Caco-2 (cell line): ENCODE measurements at regions of chr1 and their contacts with region 1.

Region 1: GRCh38 chr1:163410073-163410999 is 88.6 kb downstream of the NUF2 start:
- DNase-seq: peak; percentile 51 to 62
- H3K4me3 ChIP-seq: no peak overlapping the region
- H3K4me3 Mint-ChIP-seq: no peak overlapping the region
- H3K27ac Mint-ChIP-seq: no peak overlapping the region
- H3K4me1 ChIP-seq: no peaks in the 10 kb centered on the region
- H3K4me1 Mint-ChIP-seq: no peaks in the 10 kb centered on the region
- H3K27me3 ChIP-seq: no peaks in the 10 kb centered on the region
- H3K27me3 Mint-ChIP-seq: peaks cover 6% of the 10 kb centered on the region
- CTCF ChIP-seq: peak; percentile 77 to 82

Region 2: GRCh38 chr1:163361123-163361934 is 49.0 kb before region 1 on chr1:
- CTCF ChIA-PET with region 1: no interaction called
- POLR2A ChIA-PET with region 1: no interaction called
- intact Hi-C with region 1: loop called (anchors 2 kb)
- DNase-seq: peak in 1 of 2 experiments; percentile 39
- H3K4me3 ChIP-seq: no peak overlapping the region
- H3K4me3 Mint-ChIP-seq: no peak overlapping the region
- H3K27ac Mint-ChIP-seq: no peak overlapping the region
- H3K4me1 ChIP-seq: no peaks in the 10 kb centered on the region
- H3K4me1 Mint-ChIP-seq: peaks cover 6% of the 10 kb centered on the region
- H3K27me3 ChIP-seq: no peaks in the 10 kb centered on the region
- H3K27me3 Mint-ChIP-seq: peaks cover 2% of the 10 kb centered on the region
- CTCF ChIP-seq: peak; percentile 23 to 49

Region 3: GRCh38 chr1:163528710-163529348 is 118.5 kb after region 1 on chr1:
- CTCF ChIA-PET with region 1: no interaction called
- POLR2A ChIA-PET with region 1: no interaction called
- intact Hi-C with region 1: loop called (anchors 1 kb)
- DNase-seq: peak in 1 of 2 experiments; percentile 42
- H3K4me3 ChIP-seq: no peak overlapping the region
- H3K4me3 Mint-ChIP-seq: no peak overlapping the region
- H3K27ac Mint-ChIP-seq: no peak overlapping the region
- H3K4me1 ChIP-seq: no peaks in the 10 kb centered on the region
- H3K4me1 Mint-ChIP-seq: no peaks in the 10 kb centered on the region
- H3K27me3 ChIP-seq: no peaks in the 10 kb centered on the region
- H3K27me3 Mint-ChIP-seq: peaks cover 2% of the 10 kb centered on the region
- CTCF ChIP-seq: peak; percentile 64 to 73

Region 4: DNA sequence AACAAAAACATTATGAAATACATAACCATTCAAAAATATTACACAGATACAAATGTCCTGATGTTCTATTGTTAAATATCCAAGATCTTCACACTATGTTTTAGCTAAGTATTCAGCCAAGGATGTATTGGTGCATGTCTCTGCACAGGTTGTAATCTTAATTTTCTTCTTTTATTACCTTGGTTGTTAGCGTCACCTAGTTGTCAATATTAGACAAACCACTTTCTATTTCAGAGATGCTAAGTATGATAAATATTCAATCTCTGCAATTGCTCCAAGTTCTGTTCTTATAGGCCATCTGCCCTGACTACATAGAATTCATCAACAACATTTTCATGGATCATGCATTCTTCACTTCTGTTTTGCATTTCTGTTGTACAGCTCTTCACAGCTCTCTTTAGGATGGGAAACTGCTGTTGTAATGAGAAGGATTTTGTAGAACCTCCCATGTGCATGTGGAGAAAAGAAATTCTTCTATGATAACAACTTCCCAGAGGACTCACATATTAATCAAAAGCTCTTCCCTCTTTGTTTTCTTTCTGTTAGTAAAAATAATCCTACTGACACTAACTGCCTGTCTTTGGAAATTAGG is 291.5 kb after region 1 on chr1:
- CTCF ChIA-PET with region 1: no interaction called
- POLR2A ChIA-PET with region 1: no interaction called
- intact Hi-C with region 1: loop called (anchors 5 kb)
- DNase-seq: no peak
- H3K4me3 ChIP-seq: no peak overlapping the region
- H3K4me3 Mint-ChIP-seq: no peak overlapping the region
- H3K27ac Mint-ChIP-seq: no peak overlapping the region
- H3K4me1 ChIP-seq: no peaks in the 10 kb centered on the region
- H3K4me1 Mint-ChIP-seq: no peaks in the 10 kb centered on the region
- H3K27me3 ChIP-seq: no peaks in the 10 kb centered on the region
- H3K27me3 Mint-ChIP-seq: no peaks in the 10 kb centered on the region
- CTCF ChIP-seq: no peak

Region 5: DNA sequence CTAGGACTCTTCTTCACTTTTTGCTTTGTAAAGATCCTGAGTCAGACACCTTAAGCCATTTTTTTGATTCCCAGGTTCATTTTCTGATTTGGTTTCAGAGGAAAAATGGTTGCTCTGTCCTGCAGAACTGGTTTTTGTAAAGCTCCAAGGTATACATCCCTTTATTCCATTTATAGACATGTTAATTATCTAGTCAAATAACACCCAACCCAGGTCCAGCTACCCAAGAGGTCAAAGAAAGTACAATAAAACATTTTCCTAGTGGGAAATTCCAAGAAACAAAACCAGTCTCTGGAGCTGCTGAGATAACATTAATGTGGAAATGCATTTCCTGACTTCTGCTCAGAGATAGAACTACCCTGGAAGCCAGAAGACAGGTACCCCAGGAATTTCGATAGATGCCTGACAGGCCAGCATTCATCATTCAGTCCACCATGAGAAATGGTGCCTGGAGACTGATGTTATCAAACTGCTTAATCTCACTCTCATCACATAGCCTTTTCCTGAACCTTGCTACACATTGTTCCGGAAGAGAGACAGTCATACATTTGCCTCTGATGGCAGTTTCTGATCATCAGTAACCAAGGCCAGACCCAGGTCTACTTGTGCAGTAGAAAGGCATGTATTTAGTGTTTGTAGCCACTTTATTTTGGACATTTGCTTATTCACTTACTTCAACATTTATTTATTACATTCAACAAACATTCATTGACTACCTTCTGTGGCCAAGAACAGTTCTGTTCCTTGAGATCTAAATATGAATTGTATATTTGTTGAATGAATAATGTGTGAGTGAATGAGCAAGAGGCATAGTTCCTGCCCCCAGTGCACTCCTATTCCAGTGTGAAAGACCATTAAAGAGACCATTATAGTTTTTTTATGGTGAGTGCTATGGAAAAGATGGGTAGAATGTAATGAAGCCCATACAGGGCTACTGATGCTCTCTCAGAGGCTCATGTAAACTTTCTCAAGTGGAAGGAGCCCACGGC is 397.0 kb after region 1 on chr1:
- CTCF ChIA-PET with region 1: no interaction called
- POLR2A ChIA-PET with region 1: no interaction called
- intact Hi-C with region 1: loop called (anchors 1 kb)
- DNase-seq: no peak
- H3K4me3 ChIP-seq: no peak overlapping the region
- H3K4me3 Mint-ChIP-seq: no peak overlapping the region
- H3K27ac Mint-ChIP-seq: no peak overlapping the region
- H3K4me1 ChIP-seq: no peaks in the 10 kb centered on the region
- H3K4me1 Mint-ChIP-seq: no peaks in the 10 kb centered on the region
- H3K27me3 ChIP-seq: no peaks in the 10 kb centered on the region
- H3K27me3 Mint-ChIP-seq: peaks cover 3% of the 10 kb centered on the region
- CTCF ChIP-seq: no peak